ENCODE measurements at regions of chr4 and their contacts with region 1.

Region 1: DNA sequence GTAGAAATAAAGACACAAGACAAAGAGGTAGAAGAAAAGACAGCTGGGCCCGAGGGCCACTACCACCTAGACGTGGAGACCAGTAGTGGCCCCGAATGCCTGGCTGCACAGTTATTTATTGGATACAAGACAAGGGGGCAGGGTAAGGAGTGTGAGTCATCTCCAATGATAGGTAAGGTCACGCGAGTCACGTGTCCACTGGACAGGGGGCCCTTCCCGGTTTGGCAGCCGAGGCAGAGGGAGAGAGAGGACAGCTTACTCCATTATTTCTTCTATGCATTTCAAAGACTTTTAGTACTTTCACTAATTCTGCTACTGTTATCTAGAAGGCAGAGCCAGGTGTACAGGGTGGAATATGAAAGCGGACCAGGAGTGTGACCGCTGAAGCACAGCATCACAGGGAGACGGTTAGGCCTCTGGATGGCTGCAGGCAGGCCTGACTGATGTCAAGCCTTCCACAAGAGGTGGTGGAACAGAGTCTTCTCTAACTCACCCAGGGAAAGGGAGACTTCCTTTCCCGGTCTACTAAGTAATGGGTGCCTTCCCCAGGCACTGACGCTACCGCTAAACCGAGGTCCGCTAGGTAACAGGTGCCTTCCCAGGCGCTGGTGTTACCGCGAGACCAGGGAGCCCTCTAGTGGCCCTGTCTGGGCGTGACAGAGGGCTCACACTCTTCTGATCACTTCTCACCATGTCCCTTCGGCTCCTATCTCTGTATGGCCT is 44.9 kb downstream of the ZBTB49 start:
- DNase-seq: peak; percentile 84
- H3K4me3 Mint-ChIP-seq: no peak overlapping the region
- H3K27ac Mint-ChIP-seq: no peak overlapping the region
- H3K4me1 Mint-ChIP-seq: peaks cover 4% of the 10 kb centered on the region
- H3K27me3 Mint-ChIP-seq: no peaks in the 10 kb centered on the region

Region 2: DNA sequence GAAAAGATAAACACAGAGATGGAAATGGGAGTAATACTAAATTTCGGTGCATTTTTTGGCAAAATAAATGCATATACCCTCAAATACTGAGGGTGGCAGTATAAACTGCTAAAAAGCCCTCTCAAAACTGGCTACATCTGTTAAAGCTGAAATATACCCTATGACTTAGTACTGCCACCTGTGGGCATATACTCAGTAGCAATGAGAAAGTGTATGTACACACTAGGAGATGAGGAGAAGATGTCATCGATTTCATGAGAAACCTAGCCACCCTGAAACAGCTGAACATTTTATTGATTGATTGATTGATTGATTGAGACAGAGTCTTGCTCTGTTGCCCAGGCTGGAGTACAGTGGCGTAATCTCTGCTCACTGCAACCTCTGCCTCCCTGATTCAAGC is 74.7 kb before region 1 on chr4:
- CTCF ChIA-PET with region 1: interaction called, 13 read pairs
- POLR2A ChIA-PET with region 1: no interaction called
- intact Hi-C with region 1: loop called (anchors 1 kb)
- DNase-seq: no peak
- H3K4me3 Mint-ChIP-seq: no peak overlapping the region
- H3K27ac Mint-ChIP-seq: no peak overlapping the region
- H3K4me1 Mint-ChIP-seq: peaks cover 3% of the 10 kb centered on the region
- H3K27me3 Mint-ChIP-seq: no peaks in the 10 kb centered on the region

Region 3: DNA sequence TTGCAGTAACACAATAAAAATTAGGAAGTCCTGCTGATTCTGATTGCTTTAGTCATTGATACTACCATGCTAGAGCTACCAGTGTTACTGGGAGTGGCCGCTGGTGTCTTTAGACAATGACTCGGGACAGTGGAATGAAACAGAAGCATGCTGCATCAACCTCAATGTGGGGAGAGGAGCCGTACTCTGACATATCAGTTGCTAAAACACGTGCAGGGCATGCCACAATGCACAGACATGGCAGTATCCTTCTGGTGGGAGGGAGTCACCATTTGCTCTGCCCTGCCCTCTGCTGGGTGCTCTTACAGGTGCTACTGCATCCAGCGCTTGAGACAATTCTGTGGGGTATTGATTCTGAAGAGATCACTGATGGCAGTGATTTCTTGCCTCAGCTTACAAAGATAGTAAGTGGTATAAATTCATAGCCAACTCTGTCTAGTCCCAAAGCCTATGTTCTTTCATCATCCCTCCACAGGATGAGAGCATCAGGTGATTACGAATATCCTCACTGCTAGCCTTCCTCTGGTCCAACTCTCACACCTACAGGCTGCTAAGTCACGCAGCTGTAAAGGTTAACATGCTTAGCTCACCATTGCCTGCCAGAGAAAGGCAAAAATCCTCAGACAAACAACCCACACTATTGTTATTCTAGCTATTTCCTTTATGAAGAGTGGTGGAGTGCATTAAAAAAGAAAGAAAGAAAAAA is 95.7 kb after region 1 on chr4:
- CTCF ChIA-PET with region 1: no interaction called
- POLR2A ChIA-PET with region 1: no interaction called
- intact Hi-C with region 1: no loop called
- DNase-seq: peak; percentile 73
- H3K4me3 Mint-ChIP-seq: no peak overlapping the region
- H3K27ac Mint-ChIP-seq: no peak overlapping the region
- H3K4me1 Mint-ChIP-seq: peaks cover 13% of the 10 kb centered on the region
- H3K27me3 Mint-ChIP-seq: no peaks in the 10 kb centered on the region

Region 4: DNA sequence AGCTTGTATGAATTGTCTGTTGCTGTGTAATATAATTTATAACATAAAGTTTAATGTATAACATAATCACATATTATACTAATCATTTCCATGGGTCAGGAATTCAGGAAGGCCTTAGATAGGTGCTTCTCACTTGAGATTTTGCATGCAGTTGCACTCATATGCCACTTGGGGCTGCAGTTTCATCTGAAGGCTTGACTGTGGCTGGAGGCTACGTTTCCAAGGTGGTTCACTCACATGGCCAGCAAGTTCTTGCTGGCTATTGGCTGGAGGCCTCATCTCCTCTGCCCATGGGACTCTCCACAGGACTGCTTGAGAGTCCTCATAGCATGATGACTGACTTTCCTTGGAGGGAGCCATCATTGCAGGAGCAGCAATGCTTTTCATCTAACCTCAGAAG is 260.3 kb after region 1 on chr4:
- CTCF ChIA-PET with region 1: no interaction called
- POLR2A ChIA-PET with region 1: no interaction called
- intact Hi-C with region 1: no loop called
- DNase-seq: no peak
- H3K4me3 Mint-ChIP-seq: no peak overlapping the region
- H3K27ac Mint-ChIP-seq: no peak overlapping the region
- H3K4me1 Mint-ChIP-seq: no peaks in the 10 kb centered on the region
- H3K27me3 Mint-ChIP-seq: no peaks in the 10 kb centered on the region